ENCODE measurements at regions of chr10 and their contacts with region 1.

Region 1: GRCh38 chr10:131453594-131454355 is 142.3 kb upstream of the TCERG1L start:
- DNase-seq: peak; percentile 51 to 99
- H3K4me3 ChIP-seq: peak overlapping the region; percentile 24 to 57 (median 33)
- H3K27ac ChIP-seq: no peak overlapping the region
- H3K4me1 ChIP-seq: peaks cover 0 to 17% (median 12%) of the 10 kb centered on the region in 4 experiments; a peak in 6 of 7 replicates
- H3K27me3 ChIP-seq: peaks cover 0 to 7% (median 0%) of the 10 kb centered on the region in 4 experiments; a peak in 3 of 7 replicates
- CTCF ChIP-seq: peak; percentile 60 to 80 (median 67)
- EP300 ChIP-seq: no peak
- POLR2A ChIP-seq: no peak; a peak in 1 of 3 replicates
- RAD21 ChIP-seq: peak; percentile 49 to 62

Region 2: GRCh38 chr10:131131726-131132591 is 321.8 kb before region 1 on chr10:
- CTCF ChIA-PET with region 1: no interaction called
- POLR2A ChIA-PET with region 1: no interaction called
- DNase-seq: no peak
- H3K4me3 ChIP-seq: no peak overlapping the region
- H3K27ac ChIP-seq: no peak overlapping the region
- H3K4me1 ChIP-seq: peaks cover 0 to 12% (median 8%) of the 10 kb centered on the region in 4 experiments; a peak in 6 of 7 replicates
- H3K27me3 ChIP-seq: no peaks in the 10 kb centered on the region
- CTCF ChIP-seq: no peak
- EP300 ChIP-seq: no peak
- POLR2A ChIP-seq: no peak
- RAD21 ChIP-seq: no peak

Region 3: DNA sequence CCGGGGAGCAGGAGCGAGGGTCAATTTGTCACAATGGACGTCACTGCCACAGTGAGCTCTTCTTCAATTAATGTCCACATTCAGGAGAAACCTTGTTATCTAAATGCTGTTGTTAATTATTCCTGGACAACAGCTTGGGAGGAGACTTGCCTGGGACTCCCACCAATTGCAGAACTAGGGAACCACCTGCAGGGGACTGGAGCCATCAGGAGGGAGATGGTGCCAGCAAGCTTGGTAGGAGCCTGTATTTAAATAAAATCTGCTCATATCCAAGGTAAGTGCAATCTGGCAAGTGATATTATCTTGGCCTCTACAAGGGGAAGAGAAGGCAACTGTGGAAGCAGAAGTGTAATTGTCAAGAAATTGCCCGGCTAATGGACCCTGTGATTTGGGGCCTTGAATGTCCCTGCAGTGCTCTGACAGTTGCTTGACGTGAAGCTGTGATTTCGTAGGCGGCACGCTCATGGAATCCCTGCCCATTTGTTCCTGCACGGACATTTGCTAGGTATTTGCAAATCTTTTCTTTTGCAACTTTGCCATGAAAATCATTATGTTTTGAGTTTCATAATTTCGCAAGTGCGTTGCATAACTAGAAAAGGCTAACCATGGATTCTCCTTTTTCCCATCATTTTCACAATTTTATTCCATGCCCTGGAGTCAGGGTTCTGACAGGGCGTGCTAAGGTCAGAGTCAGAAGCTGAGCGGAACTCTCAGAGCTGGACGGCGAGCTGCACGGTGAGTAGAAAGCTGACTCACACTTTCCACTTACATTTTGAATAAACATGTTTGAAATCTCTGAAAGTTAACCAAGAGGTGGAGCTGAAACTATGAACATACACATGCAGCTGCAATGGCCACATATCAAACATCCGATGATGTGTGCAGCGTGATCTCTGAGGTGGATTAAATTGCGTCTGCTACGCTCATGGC is 57.4 kb before region 1 on chr10:
- CTCF ChIA-PET with region 1: interaction called, 14 read pairs
- POLR2A ChIA-PET with region 1: no interaction called
- DNase-seq: no peak
- H3K4me3 ChIP-seq: no peak overlapping the region
- H3K27ac ChIP-seq: no peak overlapping the region
- H3K4me1 ChIP-seq: no peaks in the 10 kb centered on the region; a peak in 1 of 7 replicates
- H3K27me3 ChIP-seq: no peaks in the 10 kb centered on the region
- CTCF ChIP-seq: peak; percentile 39 to 58 (median 57); a peak in 3 of 4 replicates
- EP300 ChIP-seq: no peak
- POLR2A ChIP-seq: no peak
- RAD21 ChIP-seq: peak; percentile 38 to 47

Region 4: GRCh38 chr10:131464789-131465188 is 11.0 kb after region 1 on chr10:
- CTCF ChIA-PET with region 1: interaction called, 32 read pairs
- POLR2A ChIA-PET with region 1: interaction called, 5 read pairs
- DNase-seq: no peak
- H3K4me3 ChIP-seq: no peak overlapping the region
- H3K27ac ChIP-seq: no peak overlapping the region
- H3K4me1 ChIP-seq: no peaks in the 10 kb centered on the region; a peak in 1 of 7 replicates
- H3K27me3 ChIP-seq: no peaks in the 10 kb centered on the region
- CTCF ChIP-seq: no peak
- EP300 ChIP-seq: no peak
- POLR2A ChIP-seq: no peak
- RAD21 ChIP-seq: no peak

Region 5: DNA sequence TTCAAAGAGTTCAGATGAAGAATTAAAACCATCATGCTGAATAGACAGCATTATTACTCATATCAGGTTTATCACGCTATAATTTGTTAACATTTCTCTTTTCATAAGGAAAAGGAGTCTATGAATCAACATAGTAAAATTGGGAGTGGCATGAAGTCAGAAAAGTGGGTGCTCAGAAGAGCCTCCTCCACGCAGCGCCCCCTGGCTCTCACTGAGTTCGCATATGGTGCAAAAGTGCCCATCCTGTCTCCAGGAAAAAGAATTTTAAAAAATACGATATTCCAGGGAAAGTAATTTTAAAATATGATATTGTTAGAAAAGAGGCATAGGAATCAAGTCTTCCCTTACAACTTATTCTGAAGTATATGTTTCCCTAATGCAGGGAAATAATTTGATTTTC is 34.0 kb after region 1 on chr10:
- CTCF ChIA-PET with region 1: interaction called, 11 read pairs
- POLR2A ChIA-PET with region 1: interaction called, 3 read pairs
- DNase-seq: no peak
- H3K4me3 ChIP-seq: no peak overlapping the region
- H3K27ac ChIP-seq: no peak overlapping the region
- H3K4me1 ChIP-seq: no peaks in the 10 kb centered on the region
- H3K27me3 ChIP-seq: no peaks in the 10 kb centered on the region
- CTCF ChIP-seq: peak; percentile 25 to 53 (median 29); a peak in 3 of 4 replicates
- EP300 ChIP-seq: no peak
- POLR2A ChIP-seq: no peak
- RAD21 ChIP-seq: peak; percentile 23 to 35; a peak in 3 of 4 replicates

Region 6: DNA sequence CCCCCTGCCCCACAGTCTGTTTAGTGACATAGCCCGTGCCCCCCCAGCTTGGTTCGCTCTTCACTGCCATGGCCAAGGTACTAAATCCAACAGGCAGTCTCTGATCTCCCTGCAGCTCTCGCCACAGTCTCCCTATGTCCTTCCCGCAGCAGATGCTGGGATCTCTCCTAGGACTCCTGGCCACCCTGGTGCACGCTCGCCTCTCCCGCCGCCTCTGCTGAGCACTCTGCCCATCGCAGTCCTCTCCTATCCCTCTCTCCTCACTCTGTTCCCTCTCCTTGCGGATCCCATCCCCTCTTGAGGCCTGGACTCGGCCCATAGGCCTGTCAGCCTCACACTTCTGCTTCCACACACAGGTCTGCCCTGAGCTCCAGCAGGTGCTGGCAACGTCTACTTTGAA is 62.5 kb after region 1 on chr10:
- CTCF ChIA-PET with region 1: interaction called, 11 read pairs
- POLR2A ChIA-PET with region 1: no interaction called
- DNase-seq: no peak
- H3K4me3 ChIP-seq: no peak overlapping the region
- H3K27ac ChIP-seq: no peak overlapping the region
- H3K4me1 ChIP-seq: peaks cover 0 to 4% (median under 1%) of the 10 kb centered on the region in 4 experiments; a peak in 3 of 7 replicates
- H3K27me3 ChIP-seq: peaks cover 0 to 6% (median 0%) of the 10 kb centered on the region in 4 experiments; a peak in 4 of 7 replicates
- CTCF ChIP-seq: no peak
- EP300 ChIP-seq: no peak
- POLR2A ChIP-seq: no peak
- RAD21 ChIP-seq: no peak

Region 7: GRCh38 chr10:131874991-131875451 is 421.2 kb after region 1 on chr10:
- CTCF ChIA-PET with region 1: interaction called, 13 read pairs
- POLR2A ChIA-PET with region 1: no interaction called
- DNase-seq: peak; percentile 68 to 94
- H3K4me3 ChIP-seq: peak overlapping the region in 3 of 4 experiments; percentile 17 to 44 (median 26); a peak in 2 of 8 replicates
- H3K27ac ChIP-seq: no peak overlapping the region
- H3K4me1 ChIP-seq: peaks cover 0 to 3% (median 0%) of the 10 kb centered on the region in 4 experiments; a peak in 2 of 7 replicates
- H3K27me3 ChIP-seq: no peaks in the 10 kb centered on the region; a peak in 1 of 7 replicates
- CTCF ChIP-seq: peak; percentile 81 to 91 (median 90)
- EP300 ChIP-seq: no peak
- POLR2A ChIP-seq: no peak
- RAD21 ChIP-seq: peak; percentile 94 to 96

Measured in H1 (cell line).